CD8-positive, alpha-beta T cell (primary cell): ENCODE measurements at regions of chr19 and their contacts with region 1.

Region 1: DNA sequence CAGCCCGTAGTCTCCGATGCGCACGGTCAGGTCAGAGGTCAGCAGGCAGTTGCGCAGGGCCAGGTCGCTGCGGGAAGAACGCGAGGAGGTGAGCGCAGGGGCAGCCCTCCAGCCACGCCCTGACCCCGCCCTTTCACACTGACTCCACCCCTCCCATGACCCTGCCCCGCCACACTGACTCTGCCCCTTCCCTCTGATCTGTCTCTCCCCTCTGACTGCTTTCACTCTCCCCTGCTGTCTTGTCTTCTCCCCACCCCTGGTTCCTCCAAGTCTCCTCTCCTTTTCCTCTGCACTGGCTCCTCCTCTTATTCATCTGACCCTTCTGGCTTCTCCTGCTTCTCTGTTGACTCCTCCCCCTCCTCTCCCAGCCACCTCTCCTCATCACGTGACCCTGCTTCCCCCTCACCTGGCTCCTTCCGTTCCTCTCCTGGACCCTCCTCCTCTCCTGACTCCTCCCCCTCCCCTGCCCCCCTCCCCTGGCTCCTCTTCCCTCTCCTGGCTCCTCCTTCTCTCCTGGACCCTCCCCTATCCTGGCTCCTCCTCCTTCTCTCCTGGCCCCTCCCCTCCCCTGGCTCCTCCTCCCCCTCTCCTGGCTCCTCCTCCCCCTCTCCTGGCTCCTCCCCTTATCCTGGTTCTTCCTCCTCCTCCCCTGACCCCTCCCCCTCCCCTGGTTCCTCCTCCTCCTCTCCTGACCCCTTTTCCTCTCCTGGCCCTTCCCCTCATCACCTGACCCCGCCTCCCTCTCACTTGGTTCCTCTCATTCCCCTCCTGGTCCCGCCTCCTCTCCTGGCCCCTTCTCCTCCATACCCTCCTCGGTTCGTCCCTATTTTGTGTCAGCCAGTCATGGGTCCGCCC is 9.9 kb downstream of the LMTK3 start:
- DNase-seq: peak in 8 of 9 experiments; percentile 47 to 82 (median 52)
- ATAC-seq: peak; percentile 74
- H3K4me3 ChIP-seq: peak overlapping the region; percentile 14 to 21
- H3K4me3 Mint-ChIP-seq: peak overlapping the region; percentile 74
- H3K27ac ChIP-seq: no peak overlapping the region
- H3K27ac Mint-ChIP-seq: no peak overlapping the region
- H3K4me1 ChIP-seq: peaks cover 11% of the 10 kb centered on the region
- H3K4me1 Mint-ChIP-seq: peaks cover 16% of the 10 kb centered on the region
- H3K27me3 ChIP-seq: peaks cover 0 to 11% of the 10 kb centered on the region in 2 experiments
- H3K27me3 Mint-ChIP-seq: no peaks in the 10 kb centered on the region
- CTCF ChIP-seq: no peak

Region 2: GRCh38 chr19:48578891-48579290 is 77.2 kb after region 1 on chr19:
- CTCF ChIA-PET with region 1: interaction called, 86 read pairs
- POLR2A ChIA-PET with region 1: interaction called, 3 read pairs
- intact Hi-C with region 1: loop called (anchors 1 kb)
- DNase-seq: no peak
- ATAC-seq: no peak
- H3K4me3 ChIP-seq: no peak overlapping the region
- H3K4me3 Mint-ChIP-seq: no peak overlapping the region
- H3K27ac ChIP-seq: no peak overlapping the region
- H3K27ac Mint-ChIP-seq: no peak overlapping the region
- H3K4me1 ChIP-seq: no peaks in the 10 kb centered on the region
- H3K4me1 Mint-ChIP-seq: peaks cover under 1% of the 10 kb centered on the region
- H3K27me3 ChIP-seq: no peaks in the 10 kb centered on the region
- H3K27me3 Mint-ChIP-seq: peaks cover 2% of the 10 kb centered on the region
- CTCF ChIP-seq: no peak

Region 3: DNA sequence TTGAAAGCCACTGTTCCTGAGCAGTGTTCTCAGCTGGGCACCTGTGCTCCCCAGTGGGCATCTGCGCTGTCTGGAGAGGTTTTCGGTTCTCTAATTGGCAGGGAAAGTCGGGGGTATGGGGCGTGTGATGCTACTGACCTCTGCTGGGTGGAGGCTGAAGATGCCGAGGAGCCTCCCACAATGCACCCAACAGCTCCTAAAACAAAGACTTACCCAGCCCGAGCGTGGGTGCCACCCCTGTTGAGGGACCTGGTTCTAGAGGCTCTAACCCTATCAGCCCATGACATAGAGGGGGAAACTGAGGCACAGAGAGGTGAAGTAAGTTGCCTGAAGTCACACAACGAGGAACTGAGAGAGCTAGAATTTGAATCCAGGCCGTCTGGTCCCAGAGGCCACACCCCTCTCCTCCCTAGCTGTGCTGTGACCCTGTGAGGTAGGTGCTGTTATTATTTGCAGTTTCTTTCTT is 107.1 kb after region 1 on chr19:
- CTCF ChIA-PET with region 1: interaction called, 17 read pairs
- POLR2A ChIA-PET with region 1: interaction called, 6 read pairs
- intact Hi-C with region 1: loop called in 1 of 2 experiments (anchors 1 kb)
- DNase-seq: peak in 8 of 9 experiments; percentile 28 to 76 (median 54)
- ATAC-seq: peak; percentile 91
- H3K4me3 ChIP-seq: no peak overlapping the region
- H3K4me3 Mint-ChIP-seq: no peak overlapping the region
- H3K27ac ChIP-seq: no peak overlapping the region
- H3K27ac Mint-ChIP-seq: no peak overlapping the region
- H3K4me1 ChIP-seq: peaks cover 6% of the 10 kb centered on the region
- H3K4me1 Mint-ChIP-seq: peaks cover 4% of the 10 kb centered on the region
- H3K27me3 ChIP-seq: no peaks in the 10 kb centered on the region
- H3K27me3 Mint-ChIP-seq: no peaks in the 10 kb centered on the region
- CTCF ChIP-seq: peak; percentile 50

Region 4: GRCh38 chr19:48812094-48812929 is 310.6 kb after region 1 on chr19:
- CTCF ChIA-PET with region 1: no interaction called
- POLR2A ChIA-PET with region 1: no interaction called
- intact Hi-C with region 1: no loop called
- DNase-seq: peak; percentile 22 to 77 (median 64)
- ATAC-seq: peak; percentile 65
- H3K4me3 ChIP-seq: peak overlapping the region; percentile 35 to 37
- H3K4me3 Mint-ChIP-seq: peak overlapping the region; percentile 80
- H3K27ac ChIP-seq: no peak overlapping the region
- H3K27ac Mint-ChIP-seq: no peak overlapping the region
- H3K4me1 ChIP-seq: peaks cover 11% of the 10 kb centered on the region
- H3K4me1 Mint-ChIP-seq: peaks cover 26% of the 10 kb centered on the region
- H3K27me3 ChIP-seq: no peaks in the 10 kb centered on the region
- H3K27me3 Mint-ChIP-seq: no peaks in the 10 kb centered on the region
- CTCF ChIP-seq: no peak